ENCODE measurements at regions of chr12 and their contacts with region 1.

Region 1: DNA sequence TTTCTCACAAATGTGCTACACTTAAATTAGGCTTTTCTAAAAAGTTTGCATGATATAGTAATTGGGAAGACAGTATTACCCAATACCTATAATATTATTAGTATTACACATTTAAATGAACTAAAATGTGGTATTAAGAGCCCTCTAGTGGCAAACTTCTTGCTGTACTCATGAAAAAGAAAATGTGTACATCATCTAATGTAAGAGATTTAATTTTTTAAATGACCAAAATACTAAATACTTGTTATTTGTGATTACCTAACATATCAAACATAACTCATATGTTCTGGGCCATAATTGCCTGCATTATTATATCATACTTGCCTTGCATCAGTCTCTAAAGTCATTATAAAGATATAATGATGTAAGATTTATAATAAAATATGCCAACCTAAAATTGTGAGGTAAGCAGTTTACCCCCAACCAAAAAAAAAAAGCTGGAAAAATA is 64.2 kb downstream of the DNAI7 start:
- DNase-seq: peak in 1 of 2 experiments; percentile 52
- H3K4me3 ChIP-seq: no peak overlapping the region
- H3K4me3 Mint-ChIP-seq: no peak overlapping the region
- H3K27ac Mint-ChIP-seq: no peak overlapping the region
- H3K4me1 ChIP-seq: peaks cover 26% of the 10 kb centered on the region
- H3K4me1 Mint-ChIP-seq: peaks cover 32% of the 10 kb centered on the region
- H3K27me3 ChIP-seq: no peaks in the 10 kb centered on the region
- H3K27me3 Mint-ChIP-seq: no peaks in the 10 kb centered on the region
- CTCF ChIP-seq: peak; percentile 63 to 84

Region 2: GRCh38 chr12:24852420-24852819 is 278.3 kb before region 1 on chr12:
- CTCF ChIA-PET with region 1: no interaction called
- POLR2A ChIA-PET with region 1: no interaction called
- intact Hi-C with region 1: loop called (anchors 2 kb)
- DNase-seq: no peak
- H3K4me3 ChIP-seq: no peak overlapping the region
- H3K4me3 Mint-ChIP-seq: no peak overlapping the region
- H3K27ac Mint-ChIP-seq: peak overlapping the region; percentile 39
- H3K4me1 ChIP-seq: no peaks in the 10 kb centered on the region
- H3K4me1 Mint-ChIP-seq: peaks cover 32% of the 10 kb centered on the region
- H3K27me3 ChIP-seq: no peaks in the 10 kb centered on the region
- H3K27me3 Mint-ChIP-seq: no peaks in the 10 kb centered on the region
- CTCF ChIP-seq: peak; percentile 54 to 61

Region 3: DNA sequence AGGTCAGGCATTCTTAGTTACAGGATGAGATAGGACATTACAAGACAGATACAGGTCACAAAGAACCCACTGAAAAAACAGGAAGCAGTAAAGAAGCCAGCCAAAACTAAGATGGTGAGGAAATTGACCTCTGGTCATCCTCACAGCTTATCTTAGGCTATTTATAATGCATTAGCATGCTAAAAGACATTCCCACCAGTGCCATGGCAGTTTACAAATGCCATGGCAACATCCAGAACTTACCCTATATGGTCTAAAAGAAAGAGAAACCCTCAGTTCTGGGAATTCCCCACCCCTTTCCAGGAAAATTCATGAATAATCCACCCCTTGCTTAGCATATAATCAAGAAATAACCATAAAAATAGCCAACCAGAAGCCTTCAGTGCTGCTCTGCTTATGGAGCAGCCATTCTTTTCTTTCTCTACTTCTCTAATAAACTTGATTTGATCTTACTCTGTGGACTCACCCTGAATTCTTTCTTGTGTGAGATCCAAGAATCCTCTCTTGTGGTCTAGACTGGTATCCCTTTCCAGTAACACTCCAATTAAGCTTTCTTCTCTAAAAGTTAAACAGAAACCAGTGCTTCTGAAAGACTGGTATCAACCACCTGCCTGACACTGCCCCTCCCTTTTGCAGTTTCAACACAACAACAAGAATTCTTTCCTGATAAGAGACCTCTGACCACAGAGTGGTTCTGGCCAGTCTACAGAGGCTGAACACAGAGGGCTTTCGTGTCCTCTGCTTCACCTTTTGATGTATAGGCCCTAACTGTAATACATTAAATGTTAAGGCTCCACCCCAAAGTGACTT is 268.8 kb before region 1 on chr12:
- CTCF ChIA-PET with region 1: no interaction called
- POLR2A ChIA-PET with region 1: no interaction called
- intact Hi-C with region 1: loop called (anchors 2 kb)
- DNase-seq: peak; percentile 88 to 89
- H3K4me3 ChIP-seq: no peak overlapping the region
- H3K4me3 Mint-ChIP-seq: peak overlapping the region; percentile 57
- H3K27ac Mint-ChIP-seq: peak overlapping the region; percentile 94
- H3K4me1 ChIP-seq: peaks cover 67% of the 10 kb centered on the region
- H3K4me1 Mint-ChIP-seq: peaks cover 39% of the 10 kb centered on the region
- H3K27me3 ChIP-seq: no peaks in the 10 kb centered on the region
- H3K27me3 Mint-ChIP-seq: no peaks in the 10 kb centered on the region
- CTCF ChIP-seq: no peak

Region 4: DNA sequence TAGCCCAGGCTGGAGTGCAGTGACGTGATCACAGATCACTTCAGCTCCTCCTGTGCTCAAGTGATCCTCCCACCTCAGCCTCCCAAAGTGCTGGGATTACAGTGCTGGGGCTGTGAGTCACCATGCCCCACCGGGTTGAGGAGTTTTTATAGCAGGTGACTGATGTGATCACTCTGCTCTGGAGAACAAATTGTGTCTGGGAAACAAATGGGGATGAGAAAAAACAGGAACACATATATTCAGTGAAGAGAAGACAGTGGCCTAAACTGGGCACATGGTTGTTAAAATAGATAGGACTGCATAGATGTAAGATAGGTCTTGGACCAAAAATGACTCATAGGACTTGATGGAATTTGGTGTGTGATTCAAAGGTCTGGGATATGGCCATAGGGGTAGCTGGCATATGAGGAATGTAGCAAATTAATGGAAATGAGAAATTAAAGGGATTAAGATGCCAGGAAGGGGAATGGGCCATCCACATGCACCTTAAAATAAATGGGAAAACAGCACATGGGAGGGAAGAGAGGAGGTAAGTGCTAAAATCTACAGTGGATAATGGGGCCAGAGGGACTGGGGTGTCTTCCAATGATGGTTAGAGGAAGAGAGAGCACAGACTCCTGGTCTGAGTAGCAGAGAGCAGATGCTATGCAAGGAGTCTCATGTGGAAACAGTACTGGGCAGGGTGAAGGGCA is 193.1 kb before region 1 on chr12:
- CTCF ChIA-PET with region 1: no interaction called
- POLR2A ChIA-PET with region 1: no interaction called
- intact Hi-C with region 1: no loop called
- DNase-seq: no peak
- H3K4me3 ChIP-seq: no peak overlapping the region
- H3K4me3 Mint-ChIP-seq: no peak overlapping the region
- H3K27ac Mint-ChIP-seq: no peak overlapping the region
- H3K4me1 ChIP-seq: peaks cover 19% of the 10 kb centered on the region
- H3K4me1 Mint-ChIP-seq: peaks cover 10% of the 10 kb centered on the region
- H3K27me3 ChIP-seq: no peaks in the 10 kb centered on the region
- H3K27me3 Mint-ChIP-seq: no peaks in the 10 kb centered on the region
- CTCF ChIP-seq: no peak

Region 5: GRCh38 chr12:24960222-24960855 is 170.4 kb before region 1 on chr12:
- CTCF ChIA-PET with region 1: interaction called, 3 read pairs
- POLR2A ChIA-PET with region 1: no interaction called
- intact Hi-C with region 1: loop called (anchors 1 kb)
- DNase-seq: peak; percentile 56 to 68
- H3K4me3 ChIP-seq: no peak overlapping the region
- H3K4me3 Mint-ChIP-seq: no peak overlapping the region
- H3K27ac Mint-ChIP-seq: no peak overlapping the region
- H3K4me1 ChIP-seq: peaks cover 16% of the 10 kb centered on the region; the same call in 1 of the 2 replicates
- H3K4me1 Mint-ChIP-seq: peaks cover 28% of the 10 kb centered on the region
- H3K27me3 ChIP-seq: no peaks in the 10 kb centered on the region
- H3K27me3 Mint-ChIP-seq: no peaks in the 10 kb centered on the region
- CTCF ChIP-seq: peak; percentile 60 to 78

Region 6: DNA sequence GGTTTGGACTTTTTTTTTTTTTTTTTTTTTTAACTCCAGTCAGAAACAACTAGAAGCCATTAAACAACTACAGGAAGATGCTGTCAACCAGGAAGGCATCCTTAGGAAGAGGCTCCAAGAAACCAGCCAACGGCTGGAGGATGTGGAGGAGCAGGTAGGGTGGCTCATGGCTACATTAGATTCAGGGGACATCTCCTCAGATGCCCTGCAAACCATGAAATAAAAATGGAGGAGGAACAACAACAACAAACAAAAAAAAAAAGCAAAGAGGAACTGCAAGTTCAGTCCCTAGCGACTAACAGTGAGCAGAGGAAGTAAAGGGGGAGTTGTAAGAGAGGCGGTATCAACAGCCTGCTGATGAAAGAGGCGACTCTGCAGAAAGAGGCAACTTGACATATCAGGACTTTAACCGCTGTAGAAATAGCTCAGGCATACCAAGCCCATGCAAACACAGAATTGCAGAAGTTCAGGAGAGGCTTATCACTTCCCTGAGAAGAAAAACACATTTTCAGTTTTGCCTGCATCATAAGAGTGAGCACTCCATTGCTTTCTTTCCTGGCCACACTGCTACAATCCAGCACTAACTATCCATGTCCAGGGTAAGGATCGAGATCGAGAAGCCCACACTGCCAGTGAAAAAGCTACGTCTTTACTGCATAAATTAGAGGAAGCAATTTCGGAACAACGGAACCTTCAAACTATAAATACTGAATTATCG is 78.4 kb before region 1 on chr12:
- CTCF ChIA-PET with region 1: interaction called, 4 read pairs
- POLR2A ChIA-PET with region 1: no interaction called
- intact Hi-C with region 1: loop called (anchors 1 kb)
- DNase-seq: peak; percentile 58 to 60
- H3K4me3 ChIP-seq: peak overlapping the region; percentile 27
- H3K4me3 Mint-ChIP-seq: peak overlapping the region; percentile 56
- H3K27ac Mint-ChIP-seq: peak overlapping the region; percentile 2
- H3K4me1 ChIP-seq: peaks cover 9% of the 10 kb centered on the region; the same call in 1 of the 2 replicates
- H3K4me1 Mint-ChIP-seq: peaks cover 19% of the 10 kb centered on the region
- H3K27me3 ChIP-seq: no peaks in the 10 kb centered on the region
- H3K27me3 Mint-ChIP-seq: no peaks in the 10 kb centered on the region
- CTCF ChIP-seq: no peak

Region 7: GRCh38 chr12:25151476-25151875 is 20.7 kb after region 1 on chr12:
- CTCF ChIA-PET with region 1: interaction called, 4 read pairs
- POLR2A ChIA-PET with region 1: no interaction called
- intact Hi-C with region 1: loop called (anchors 1 kb)
- DNase-seq: no peak
- H3K4me3 ChIP-seq: no peak overlapping the region
- H3K4me3 Mint-ChIP-seq: no peak overlapping the region
- H3K27ac Mint-ChIP-seq: no peak overlapping the region
- H3K4me1 ChIP-seq: no peaks in the 10 kb centered on the region
- H3K4me1 Mint-ChIP-seq: peaks cover 6% of the 10 kb centered on the region
- H3K27me3 ChIP-seq: no peaks in the 10 kb centered on the region
- H3K27me3 Mint-ChIP-seq: no peaks in the 10 kb centered on the region
- CTCF ChIP-seq: no peak

Region 8: GRCh38 chr12:25162866-25163265 is 32.1 kb after region 1 on chr12:
- CTCF ChIA-PET with region 1: no interaction called
- POLR2A ChIA-PET with region 1: no interaction called
- intact Hi-C with region 1: no loop called
- DNase-seq: no peak
- H3K4me3 ChIP-seq: no peak overlapping the region
- H3K4me3 Mint-ChIP-seq: no peak overlapping the region
- H3K27ac Mint-ChIP-seq: no peak overlapping the region
- H3K4me1 ChIP-seq: no peaks in the 10 kb centered on the region
- H3K4me1 Mint-ChIP-seq: no peaks in the 10 kb centered on the region
- H3K27me3 ChIP-seq: no peaks in the 10 kb centered on the region
- H3K27me3 Mint-ChIP-seq: peaks cover 5% of the 10 kb centered on the region
- CTCF ChIP-seq: no peak

Region 9: GRCh38 chr12:25186788-25187397 is 56.1 kb after region 1 on chr12:
- CTCF ChIA-PET with region 1: no interaction called
- POLR2A ChIA-PET with region 1: no interaction called
- intact Hi-C with region 1: no loop called
- DNase-seq: no peak
- H3K4me3 ChIP-seq: no peak overlapping the region
- H3K4me3 Mint-ChIP-seq: no peak overlapping the region
- H3K27ac Mint-ChIP-seq: no peak overlapping the region
- H3K4me1 ChIP-seq: no peaks in the 10 kb centered on the region
- H3K4me1 Mint-ChIP-seq: no peaks in the 10 kb centered on the region
- H3K27me3 ChIP-seq: no peaks in the 10 kb centered on the region; the same call in 1 of the 2 replicates
- H3K27me3 Mint-ChIP-seq: peaks cover 2% of the 10 kb centered on the region
- CTCF ChIP-seq: no peak